ENCODE measurements at regions of chr5 and their contacts with region 1.

Region 1: DNA sequence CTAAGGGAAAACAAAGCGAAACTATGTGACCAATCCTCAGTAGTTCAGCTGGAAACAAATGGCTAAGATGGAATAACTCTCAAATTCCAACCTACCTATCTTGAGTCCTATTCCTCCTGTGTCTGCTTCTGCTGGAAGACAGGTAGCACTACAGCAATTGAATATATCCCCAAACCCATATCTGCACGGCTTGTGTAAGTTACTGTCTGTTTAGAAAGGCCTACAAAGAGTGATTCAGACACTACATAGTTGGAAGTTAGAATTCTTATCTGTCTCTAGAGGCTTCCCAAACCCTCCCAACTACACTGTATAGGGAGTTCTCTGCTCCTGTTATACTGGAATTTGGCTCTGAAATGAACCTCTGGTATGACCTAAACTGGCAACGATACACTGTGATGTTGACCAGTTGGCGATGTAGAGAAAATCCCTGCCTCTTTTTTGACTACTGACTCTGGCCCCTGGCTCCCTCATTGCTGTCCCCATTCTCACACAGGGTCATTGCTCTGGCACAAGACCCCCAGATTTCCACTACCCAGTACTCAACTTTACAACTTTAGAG is 22.6 kb upstream of the NADK2 start:
- DNase-seq: no peak
- H3K4me3 ChIP-seq: no peak overlapping the region
- H3K27me3 ChIP-seq: no peaks in the 10 kb centered on the region
- CTCF ChIP-seq: no peak

Region 2: GRCh38 chr5:35365758-35366157 is 898.5 kb before region 1 on chr5:
- CTCF ChIA-PET with region 1: no interaction called
- POLR2A ChIA-PET with region 1: no interaction called
- DNase-seq: no peak
- H3K4me3 ChIP-seq: no peak overlapping the region
- H3K27me3 ChIP-seq: no peaks in the 10 kb centered on the region
- CTCF ChIP-seq: no peak

Region 3: DNA sequence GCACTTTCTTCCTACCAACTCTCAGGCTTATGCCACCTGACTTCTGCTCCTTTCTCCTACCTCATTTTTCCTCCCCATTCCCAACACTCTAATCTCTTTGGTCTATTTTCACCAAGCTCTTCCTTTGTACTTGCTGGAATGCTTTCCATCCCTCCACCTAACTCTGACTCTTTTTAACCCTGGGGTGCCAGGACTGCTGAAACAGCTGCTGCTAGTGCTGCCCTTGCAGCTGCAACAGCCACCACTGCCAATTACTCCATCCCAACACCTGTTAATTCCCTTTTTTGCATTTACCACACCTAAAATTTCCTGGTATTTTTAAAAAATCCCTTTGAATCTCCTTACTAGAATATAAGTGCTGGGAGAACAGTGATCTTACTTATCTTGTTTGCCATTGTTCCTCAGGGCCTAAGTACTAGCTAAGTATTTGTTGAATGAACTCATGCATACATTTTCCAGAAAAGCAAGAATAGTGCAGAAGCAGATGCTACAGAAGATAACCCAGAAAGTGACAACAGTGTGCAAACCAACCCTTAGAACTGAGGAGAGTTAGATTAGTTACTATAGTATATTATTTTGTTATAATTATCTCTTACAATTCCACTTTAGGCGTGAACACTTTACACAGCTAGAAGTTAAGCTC is 34.0 kb before region 1 on chr5:
- CTCF ChIA-PET with region 1: no interaction called
- POLR2A ChIA-PET with region 1: no interaction called
- DNase-seq: no peak
- H3K4me3 ChIP-seq: no peak overlapping the region
- H3K27me3 ChIP-seq: no peaks in the 10 kb centered on the region
- CTCF ChIP-seq: no peak

Region 4: GRCh38 chr5:36298516-36298915 is 34.2 kb after region 1 on chr5:
- CTCF ChIA-PET with region 1: interaction called, 87 read pairs
- POLR2A ChIA-PET with region 1: no interaction called
- DNase-seq: peak; percentile 78
- H3K4me3 ChIP-seq: no peak overlapping the region
- H3K27me3 ChIP-seq: no peaks in the 10 kb centered on the region
- CTCF ChIP-seq: no peak

Region 5: GRCh38 chr5:36373527-36374086 is 109.3 kb after region 1 on chr5:
- CTCF ChIA-PET with region 1: no interaction called
- POLR2A ChIA-PET with region 1: interaction called, 20 read pairs
- DNase-seq: no peak
- H3K4me3 ChIP-seq: no peak overlapping the region
- H3K27me3 ChIP-seq: 0 out of 2 replicates have a peak, but pooled peaks cover 2% of the 10 kb centered on the region
- CTCF ChIP-seq: no peak

Region 6: GRCh38 chr5:36507332-36507952 is 243.2 kb after region 1 on chr5:
- CTCF ChIA-PET with region 1: interaction called, 14 read pairs
- POLR2A ChIA-PET with region 1: interaction called, 20 read pairs
- DNase-seq: no peak
- H3K4me3 ChIP-seq: no peak overlapping the region
- H3K27me3 ChIP-seq: peaks cover 3% of the 10 kb centered on the region
- CTCF ChIP-seq: peak; percentile 91